OCI-LY7 (cell line): ENCODE measurements at regions of chr10 and their contacts with region 1.

Region 1: DNA sequence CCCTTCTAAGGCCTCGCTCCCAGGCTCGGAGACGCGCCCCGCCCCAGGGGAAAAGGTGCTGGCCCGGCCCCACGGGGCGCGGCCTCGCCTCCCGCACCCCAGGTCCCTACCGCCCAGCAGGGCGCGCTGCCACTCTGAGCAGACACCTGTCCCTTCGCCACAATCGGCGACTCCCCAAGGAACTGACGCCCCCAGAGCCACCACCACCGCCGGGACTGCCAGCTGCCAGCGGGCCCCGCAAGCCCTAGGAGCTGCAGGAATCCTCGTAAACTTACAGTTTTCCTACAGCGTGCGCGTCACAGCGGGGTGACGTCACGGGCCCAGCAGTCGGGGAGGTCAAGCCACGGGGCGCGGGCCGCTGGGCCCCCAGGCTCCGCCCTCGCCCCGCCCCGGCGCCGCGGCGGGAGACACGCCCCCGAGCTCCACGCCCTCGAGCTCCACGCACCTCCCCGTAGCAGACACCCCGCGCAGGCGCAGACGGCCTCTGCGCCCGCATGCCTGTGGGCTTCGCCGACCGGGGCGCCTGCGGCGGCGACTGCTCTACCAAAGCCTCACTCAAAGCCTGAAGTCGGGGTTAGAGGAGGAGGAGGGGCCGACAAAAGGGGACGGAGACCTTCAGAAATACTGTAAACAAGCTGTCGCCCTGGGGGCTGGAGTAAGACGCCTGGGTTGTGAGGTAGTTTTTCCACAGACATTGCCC is at the start of gene ZNF438:
- DNase-seq: peak; percentile 92
- H3K4me3 ChIP-seq: peak within 1 kb of the TSS; percentile 74
- H3K27ac ChIP-seq: peak within 1 kb of the TSS; percentile 80
- H3K4me1 ChIP-seq: peaks cover 8% of the 10 kb centered on the region
- CTCF ChIP-seq: peak; percentile 75
- total RNA-seq, gene ZNF438: 1.3 and 2.0 TPM in 2 replicates

Region 2: GRCh38 chr10:30687698-30688219 is 343.9 kb before region 1 on chr10:
- CTCF ChIA-PET with region 1: no interaction called
- POLR2A ChIA-PET with region 1: no interaction called
- intact Hi-C with region 1: loop called (anchors 5 kb)
- DNase-seq: peak; percentile 81
- H3K4me3 ChIP-seq: no peak overlapping the region
- H3K27ac ChIP-seq: no peak overlapping the region
- H3K4me1 ChIP-seq: peaks cover 21% of the 10 kb centered on the region
- CTCF ChIP-seq: peak; percentile 99

Region 3: GRCh38 chr10:31759799-31760626 is 728.3 kb after region 1 on chr10:
- CTCF ChIA-PET with region 1: no interaction called
- POLR2A ChIA-PET with region 1: no interaction called
- intact Hi-C with region 1: loop called (anchors 5 kb)
- DNase-seq: peak; percentile 98
- H3K4me3 ChIP-seq: peak overlapping the region; percentile 80
- H3K27ac ChIP-seq: peak overlapping the region; percentile 42
- H3K4me1 ChIP-seq: peaks cover 8% of the 10 kb centered on the region
- CTCF ChIP-seq: no peak